GM12878 (cell line): ENCODE measurements at regions of chr16 and their contacts with region 1.

Region 1: DNA sequence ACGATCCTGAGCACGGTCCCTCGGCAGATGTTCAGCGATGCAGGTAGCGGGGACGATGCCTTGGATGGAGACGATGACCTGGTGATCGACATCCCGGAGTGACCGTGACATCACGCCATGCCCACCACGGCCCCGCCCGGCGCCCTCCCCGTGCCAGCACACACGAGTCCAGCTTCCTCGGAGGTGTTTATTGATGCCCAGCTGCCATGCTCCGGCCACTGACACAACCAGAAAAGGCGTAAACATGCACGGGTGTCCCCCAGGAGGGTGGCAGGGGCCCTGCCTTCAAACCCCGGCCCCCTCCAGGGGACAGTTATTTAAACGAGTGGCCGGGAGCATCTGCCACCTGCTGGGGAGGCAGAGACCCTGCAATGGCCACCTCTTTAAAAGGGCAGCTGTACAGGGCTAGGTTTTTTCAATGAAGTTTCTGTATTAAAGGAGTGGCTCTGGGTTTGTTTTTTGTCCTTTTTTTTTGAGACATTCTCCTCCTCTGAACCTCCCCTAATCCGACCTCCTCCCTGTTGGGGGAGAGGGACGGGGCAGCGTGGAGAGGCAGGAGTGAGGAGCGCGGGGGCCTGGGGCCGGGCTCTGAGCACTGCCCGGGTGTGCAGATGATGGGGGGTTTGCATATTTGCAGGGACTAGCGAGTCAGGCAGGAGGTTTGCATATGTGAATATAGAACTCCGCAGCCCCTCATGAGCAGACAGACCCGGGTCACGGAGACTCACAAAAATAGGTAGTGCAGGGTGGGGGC is 5.3 kb downstream of the DOC2A start:
- DNase-seq: no peak
- ATAC-seq: peak; percentile 85
- H3K4me3 ChIP-seq: no peak overlapping the region
- H3K27ac ChIP-seq: no peak overlapping the region
- H3K4me1 ChIP-seq: no peaks in the 10 kb centered on the region
- H3K27me3 ChIP-seq: peaks cover 0 to 1% of the 10 kb centered on the region in 2 experiments; a peak in 1 of 4 replicates
- CTCF ChIP-seq: peak; percentile 67 to 80 (median 79)
- EP300 ChIP-seq: no peak
- POLR2A ChIP-seq: no peak; the same call in 1 of the 2 replicates
- RAD21 ChIP-seq: peak; percentile 57

Region 2: DNA sequence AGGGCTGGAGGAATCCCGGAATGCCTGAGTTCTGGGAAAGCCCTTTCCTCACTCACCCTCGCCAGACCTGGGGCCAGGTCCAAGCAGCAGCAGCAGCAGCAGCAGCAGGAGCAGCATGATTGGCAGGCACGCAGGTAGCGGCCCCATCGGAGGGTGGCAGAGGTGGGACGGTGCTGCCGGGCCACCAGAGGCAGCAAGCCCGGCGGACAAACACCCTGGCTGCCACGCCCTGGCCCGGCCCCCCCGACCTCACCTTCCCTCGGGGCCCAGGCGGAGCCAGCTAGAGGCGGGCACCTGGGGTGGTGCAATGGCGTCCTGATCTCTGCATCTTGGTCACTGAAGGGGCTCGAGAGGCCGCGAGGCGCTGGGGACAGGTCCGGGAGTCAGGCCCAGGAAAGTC is 898.2 kb before region 1 on chr16:
- CTCF ChIA-PET with region 1: no interaction called
- POLR2A ChIA-PET with region 1: no interaction called
- RAD21 ChIA-PET with region 1: no interaction called
- SMC1A ChIA-PET with region 1: no interaction called
- in situ Hi-C with region 1: loop called (anchors 25 kb)
- intact Hi-C with region 1: no loop called
- DNase-seq: no peak
- ATAC-seq: no peak
- H3K4me3 ChIP-seq: no peak overlapping the region
- H3K27ac ChIP-seq: no peak overlapping the region
- H3K4me1 ChIP-seq: no peaks in the 10 kb centered on the region
- H3K27me3 ChIP-seq: no peaks in the 10 kb centered on the region
- CTCF ChIP-seq: no peak
- EP300 ChIP-seq: no peak
- POLR2A ChIP-seq: no peak
- RAD21 ChIP-seq: no peak